CD8-positive, alpha-beta T cell (primary cell): ENCODE measurements at regions of chr3 and their contacts with region 1.

Region 1: GRCh38 chr3:112561731-112562688 is at the starts of genes ATG3 and SLC35A5:
- DNase-seq: peak; percentile 98 to 100 (median 99)
- ATAC-seq: peak; percentile 77
- H3K4me3 ChIP-seq: peak within 1 kb of the TSS; percentile 75 to 82
- H3K4me3 Mint-ChIP-seq: peak within 1 kb of the TSS; percentile 97
- H3K27ac ChIP-seq: peak within 1 kb of the TSS; percentile 83 to 93
- H3K27ac Mint-ChIP-seq: peak within 1 kb of the TSS; percentile 99
- H3K4me1 ChIP-seq: peaks cover 22% of the 10 kb centered on the region
- H3K4me1 Mint-ChIP-seq: peaks cover 47% of the 10 kb centered on the region
- H3K27me3 ChIP-seq: no peaks in the 10 kb centered on the region
- H3K27me3 Mint-ChIP-seq: no peaks in the 10 kb centered on the region
- CTCF ChIP-seq: no peak
- total RNA-seq, gene ATG3: 50.0 to 54.4 TPM
- total RNA-seq, gene SLC35A5: 4.4 to 6.1 TPM

Region 2: DNA sequence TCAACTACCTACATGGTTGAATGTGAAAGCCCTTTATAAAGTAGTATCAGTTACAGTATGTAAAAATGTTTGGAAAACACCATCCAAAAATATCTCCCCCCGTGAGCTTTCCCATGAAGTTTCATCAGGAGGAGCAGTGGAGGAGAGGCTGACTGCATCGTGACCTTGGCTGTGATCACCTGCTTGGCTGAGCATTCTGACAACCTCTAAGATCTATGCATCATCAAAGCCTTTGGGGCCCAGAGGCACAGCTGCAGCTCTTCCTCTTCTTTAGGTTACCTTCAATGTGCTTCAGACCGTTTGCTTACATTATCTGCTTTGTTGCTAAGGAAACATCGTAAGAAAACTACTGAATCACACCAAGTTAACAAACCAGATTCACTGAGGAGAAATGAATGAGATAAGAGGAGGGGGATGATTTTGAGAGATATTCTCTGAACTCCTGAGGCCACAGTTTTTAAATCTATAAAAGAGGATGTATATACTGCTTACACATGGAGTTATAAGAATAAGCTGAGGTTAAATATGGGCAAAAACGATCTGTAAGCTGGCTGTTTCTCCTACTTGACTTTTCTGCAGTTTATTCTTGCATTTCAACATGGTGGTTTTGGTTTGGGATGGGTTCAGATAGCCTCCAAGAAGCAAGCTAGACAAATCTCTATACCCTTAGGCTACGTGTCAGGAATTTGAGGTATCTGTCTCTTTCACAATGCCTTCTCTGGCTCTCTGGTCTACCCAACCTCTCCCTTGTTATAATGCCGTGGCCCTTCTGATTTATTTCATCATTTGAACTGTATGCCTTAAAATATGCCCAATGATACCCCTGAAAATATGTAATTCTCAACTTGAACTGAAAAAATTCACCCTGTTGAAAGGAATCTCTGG is 432.9 kb before region 1 on chr3:
- CTCF ChIA-PET with region 1: no interaction called
- POLR2A ChIA-PET with region 1: no interaction called
- intact Hi-C with region 1: loop called in 1 of 2 experiments (anchors 2 kb)
- DNase-seq: peak; percentile 17 to 88 (median 52)
- ATAC-seq: peak; percentile 68
- H3K4me3 ChIP-seq: no peak overlapping the region
- H3K4me3 Mint-ChIP-seq: peak overlapping the region; percentile 4
- H3K27ac ChIP-seq: peak overlapping the region; percentile 55 to 82
- H3K27ac Mint-ChIP-seq: peak overlapping the region; percentile 83
- H3K4me1 ChIP-seq: peaks cover 75% of the 10 kb centered on the region
- H3K4me1 Mint-ChIP-seq: peaks cover 89% of the 10 kb centered on the region
- H3K27me3 ChIP-seq: no peaks in the 10 kb centered on the region
- H3K27me3 Mint-ChIP-seq: no peaks in the 10 kb centered on the region
- CTCF ChIP-seq: no peak

Region 3: DNA sequence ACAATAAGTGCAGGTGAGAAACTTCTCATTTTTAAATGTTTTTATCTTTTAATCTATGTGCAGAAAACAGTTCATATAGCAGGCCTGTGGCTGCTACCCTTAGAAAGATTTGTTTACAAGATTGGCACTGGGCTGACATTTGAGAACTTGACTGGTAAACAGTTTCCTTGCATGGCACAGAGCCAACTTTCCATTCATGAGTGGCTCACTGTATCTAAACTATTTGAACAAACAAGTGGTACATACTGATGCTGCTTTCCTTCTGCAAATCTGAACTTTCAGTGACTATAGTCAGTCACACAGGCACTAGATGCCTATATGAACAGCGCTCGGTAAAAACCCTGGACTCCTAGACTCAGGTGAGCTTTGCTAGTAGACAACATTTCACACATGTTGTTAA is 422.5 kb after region 1 on chr3:
- CTCF ChIA-PET with region 1: no interaction called
- POLR2A ChIA-PET with region 1: no interaction called
- intact Hi-C with region 1: loop called in 1 of 2 experiments (anchors 10 kb)
- DNase-seq: peak in 6 of 9 experiments; percentile 25 to 68 (median 47)
- ATAC-seq: peak; percentile 52
- H3K4me3 ChIP-seq: no peak overlapping the region
- H3K4me3 Mint-ChIP-seq: no peak overlapping the region
- H3K27ac ChIP-seq: peak overlapping the region in 1 of 2 experiments; percentile 17
- H3K27ac Mint-ChIP-seq: no peak overlapping the region
- H3K4me1 ChIP-seq: peaks cover 6% of the 10 kb centered on the region
- H3K4me1 Mint-ChIP-seq: peaks cover 33% of the 10 kb centered on the region
- H3K27me3 ChIP-seq: no peaks in the 10 kb centered on the region
- H3K27me3 Mint-ChIP-seq: no peaks in the 10 kb centered on the region
- CTCF ChIP-seq: no peak

Region 4: GRCh38 chr3:113019182-113020137 is 457.4 kb after region 1 on chr3:
- CTCF ChIA-PET with region 1: no interaction called
- POLR2A ChIA-PET with region 1: interaction called, 3 read pairs
- intact Hi-C with region 1: loop called (anchors 1 to 5 kb)
- DNase-seq: peak; percentile 54 to 95 (median 82)
- ATAC-seq: peak; percentile 87
- H3K4me3 ChIP-seq: peak overlapping the region; percentile 57 to 87
- H3K4me3 Mint-ChIP-seq: peak overlapping the region; percentile 95
- H3K27ac ChIP-seq: peak overlapping the region; percentile 67 to 95
- H3K27ac Mint-ChIP-seq: peak overlapping the region; percentile 94
- H3K4me1 ChIP-seq: peaks cover 29% of the 10 kb centered on the region
- H3K4me1 Mint-ChIP-seq: peaks cover 64% of the 10 kb centered on the region
- H3K27me3 ChIP-seq: no peaks in the 10 kb centered on the region
- H3K27me3 Mint-ChIP-seq: no peaks in the 10 kb centered on the region
- CTCF ChIP-seq: no peak

Region 5: DNA sequence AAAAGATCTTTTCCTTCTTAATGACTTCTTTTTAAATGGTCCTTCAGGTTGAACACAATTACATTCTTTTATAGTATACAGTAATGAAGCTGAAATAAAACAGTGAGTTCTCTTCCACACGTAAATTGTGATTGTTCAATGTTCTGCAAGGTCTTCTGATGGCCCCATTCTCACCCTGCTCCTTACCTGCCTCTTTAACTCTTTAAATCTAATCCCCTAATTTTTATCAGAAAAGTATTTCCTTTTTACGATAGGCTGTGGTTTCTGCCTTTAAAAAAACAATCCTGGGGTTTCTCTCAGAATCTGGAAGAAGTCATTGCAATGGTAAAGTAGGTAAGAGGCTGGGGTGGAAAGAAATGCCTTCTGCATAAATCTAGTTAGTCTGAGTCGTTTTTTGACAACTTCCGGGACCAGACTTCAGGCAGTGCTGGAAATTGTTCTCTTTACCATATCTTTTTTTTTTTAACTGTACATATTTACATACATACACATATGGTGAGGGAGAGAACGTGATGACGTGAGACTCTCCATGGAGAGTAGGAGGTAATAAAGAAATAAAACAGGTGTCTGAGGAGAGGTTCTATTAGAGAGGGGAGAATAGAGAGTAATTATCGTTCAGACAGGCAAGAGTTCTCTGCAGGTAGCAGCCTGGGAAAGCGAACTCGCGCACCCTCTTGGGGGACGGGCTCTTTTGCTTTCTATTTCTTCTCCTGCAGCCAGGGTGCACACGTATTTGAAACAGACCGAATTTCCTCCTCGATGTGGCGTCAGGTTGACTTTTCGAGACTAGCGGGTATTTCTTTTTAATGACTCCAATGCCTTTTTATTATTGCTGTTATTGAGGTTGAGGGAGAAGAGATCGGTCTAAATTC is 970.1 kb after region 1 on chr3 and contains the start of gene SIDT1:
- CTCF ChIA-PET with region 1: no interaction called
- POLR2A ChIA-PET with region 1: no interaction called
- intact Hi-C with region 1: loop called (anchors 2 to 5 kb)
- DNase-seq: peak; percentile 50 to 90 (median 73)
- ATAC-seq: peak; percentile 77
- H3K4me3 ChIP-seq: peak within 1 kb of the TSS; percentile 83 to 93
- H3K4me3 Mint-ChIP-seq: peak within 1 kb of the TSS; percentile 96
- H3K27ac ChIP-seq: peak within 1 kb of the TSS; percentile 87 to 93
- H3K27ac Mint-ChIP-seq: peak within 1 kb of the TSS; percentile 97
- H3K4me1 ChIP-seq: peaks cover 43% of the 10 kb centered on the region
- H3K4me1 Mint-ChIP-seq: peaks cover 52% of the 10 kb centered on the region
- H3K27me3 ChIP-seq: no peaks in the 10 kb centered on the region
- H3K27me3 Mint-ChIP-seq: no peaks in the 10 kb centered on the region
- CTCF ChIP-seq: no peak
- total RNA-seq, gene SIDT1: 32.1 to 38.3 TPM